Naive thymus-derived CD8-positive, alpha-beta T cell (primary cell): ENCODE measurements at regions of chr1 and their contacts with region 1.

Region 1: DNA sequence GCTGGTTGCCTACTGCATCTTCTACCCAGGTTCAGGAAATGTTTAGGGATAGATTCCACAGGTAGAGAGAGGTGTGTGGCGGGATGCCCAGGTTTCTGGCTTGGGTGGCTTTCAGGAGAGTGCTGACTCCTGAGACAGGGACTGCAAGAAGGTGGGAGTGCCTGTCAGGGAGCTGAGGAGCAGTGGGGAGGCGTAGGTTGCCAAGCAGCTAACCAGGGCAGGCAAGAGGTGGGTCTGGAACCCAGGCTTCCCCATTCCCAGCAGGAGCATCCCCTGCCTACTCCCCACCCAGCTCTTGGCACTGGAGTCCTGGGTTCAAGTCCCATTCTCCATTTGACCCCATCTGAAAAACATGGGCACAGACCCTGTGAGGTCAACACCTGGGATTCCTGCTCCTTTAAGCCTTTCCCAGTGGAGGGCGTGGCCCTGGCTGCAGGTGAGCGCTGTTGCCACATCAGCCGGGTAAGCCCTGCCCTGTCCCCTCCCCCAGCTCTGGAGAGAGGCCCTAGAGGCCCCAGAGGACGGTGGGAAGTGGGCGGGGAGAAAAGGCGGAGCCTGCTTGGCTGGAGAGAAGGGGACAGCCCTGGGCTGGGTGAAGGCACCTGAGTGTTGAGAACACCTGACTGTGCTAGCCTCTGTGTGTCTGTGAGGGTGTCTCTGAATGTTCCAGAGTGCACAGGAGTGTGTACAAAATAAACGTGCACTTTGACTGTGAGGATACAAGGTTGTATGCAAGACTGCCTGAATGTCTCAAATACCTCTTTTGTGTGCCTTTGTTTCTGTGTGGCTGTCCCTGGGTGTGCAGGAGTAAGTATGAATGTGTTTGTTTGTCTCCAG is 14.0 kb upstream of the SYNC start:
- DNase-seq: peak in 3 of 10 donors; percentile 17 to 35 (median 20)
- ATAC-seq: peak; percentile 33 to 53
- H3K4me3 Mint-ChIP-seq: no peak overlapping the region
- H3K27ac Mint-ChIP-seq: peak overlapping the region in 1 of 10 donors; percentile 15
- H3K4me1 Mint-ChIP-seq: peaks cover 9 to 20% (median 12%) of the 10 kb centered on the region in 4 donors
- H3K27me3 Mint-ChIP-seq: peaks cover 2 to 12% (median 3%) of the 10 kb centered on the region in 5 donors

Region 2: DNA sequence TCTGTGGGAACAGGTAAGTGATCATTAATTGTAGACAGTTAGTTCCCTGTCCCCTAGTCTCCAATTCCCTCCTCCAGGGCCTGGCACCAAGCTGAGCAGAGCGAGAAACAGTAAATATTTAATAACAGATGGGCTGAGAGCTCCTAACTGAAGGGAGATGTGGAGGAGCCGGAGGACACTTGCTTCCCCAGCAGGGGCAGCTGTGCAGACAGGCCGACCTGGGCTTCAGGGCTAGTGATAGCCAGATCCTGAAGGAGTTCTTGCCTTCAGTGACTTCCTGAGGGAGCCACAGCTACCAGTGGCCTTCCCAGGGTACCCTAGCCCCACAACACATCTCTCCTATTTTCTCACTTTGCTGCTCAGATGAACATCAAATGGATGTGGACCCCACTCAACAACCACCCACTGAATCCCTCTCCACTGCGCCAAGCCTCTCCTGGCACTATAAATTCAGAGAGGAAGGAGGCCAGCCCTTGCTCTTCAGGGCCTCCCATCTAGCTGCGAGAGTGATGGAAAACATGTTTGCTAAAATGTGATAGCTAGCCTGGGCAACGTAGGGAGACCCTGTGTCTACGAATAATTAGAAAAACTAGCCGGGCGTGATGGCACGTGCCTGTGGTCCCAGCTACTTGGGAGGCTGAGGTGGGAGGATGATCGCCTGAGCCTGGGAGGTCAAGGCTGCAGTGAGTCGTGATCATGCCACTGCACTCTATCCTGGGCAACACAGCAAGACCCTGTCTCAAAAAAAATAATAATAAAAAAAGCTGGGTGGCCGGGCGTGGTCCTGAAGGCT is 12.9 kb after region 1 on chr1:
- POLR2A ChIA-PET with region 1: interaction called, 10 read pairs
- DNase-seq: no peak
- ATAC-seq: no peak
- H3K4me3 Mint-ChIP-seq: no peak overlapping the region
- H3K27ac Mint-ChIP-seq: no peak overlapping the region
- H3K4me1 Mint-ChIP-seq: peaks cover 5 to 15% (median 12%) of the 10 kb centered on the region in 4 donors
- H3K27me3 Mint-ChIP-seq: peaks cover 3 to 12% (median 9%) of the 10 kb centered on the region in 5 donors

Region 3: DNA sequence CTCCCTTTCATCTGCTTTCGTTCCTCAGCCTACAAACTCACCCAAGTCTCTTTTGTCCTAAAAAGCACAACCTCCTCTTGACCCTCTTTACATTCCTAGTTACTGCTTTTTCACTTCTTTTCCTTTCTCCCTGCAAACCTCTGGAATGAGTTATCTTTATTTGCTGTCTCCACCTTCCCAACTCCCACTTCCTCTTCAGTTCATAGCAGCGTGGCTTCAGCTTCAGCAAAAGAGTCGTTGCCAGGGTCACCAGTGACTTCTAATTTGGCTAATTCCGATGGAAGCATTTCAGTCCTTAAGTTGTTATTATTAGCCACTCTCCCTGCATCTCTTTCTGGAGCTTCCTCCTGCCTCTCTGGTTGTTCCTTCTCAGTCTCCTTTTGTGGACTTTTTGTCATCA is 190.9 kb after region 1 on chr1:
- POLR2A ChIA-PET with region 1: no interaction called
- DNase-seq: no peak
- ATAC-seq: no peak
- H3K4me3 Mint-ChIP-seq: no peak overlapping the region
- H3K27ac Mint-ChIP-seq: no peak overlapping the region
- H3K4me1 Mint-ChIP-seq: peaks cover 0 to 2% (median 0%) of the 10 kb centered on the region in 4 donors
- H3K27me3 Mint-ChIP-seq: peaks cover 2 to 15% (median 11%) of the 10 kb centered on the region in 5 donors